MCF 10A (cell line): ENCODE measurements at regions of chr1 and their contacts with region 1.

Region 1: GRCh38 chr1:197868751-197869489 is 33.5 kb upstream of the C1orf53 start:
- DNase-seq: peak; percentile 86
- H3K4me3 Mint-ChIP-seq: no peak overlapping the region
- H3K27ac Mint-ChIP-seq: no peak overlapping the region
- H3K4me1 Mint-ChIP-seq: no peaks in the 10 kb centered on the region
- H3K27me3 Mint-ChIP-seq: no peaks in the 10 kb centered on the region
- CTCF ChIP-seq: peak; percentile 88

Region 2: GRCh38 chr1:197526736-197527371 is 342.1 kb before region 1 on chr1:
- CTCF ChIA-PET with region 1: interaction called, 12 read pairs
- POLR2A ChIA-PET with region 1: no interaction called
- intact Hi-C with region 1: loop called (anchors 1 kb)
- DNase-seq: peak; percentile 50
- H3K4me3 Mint-ChIP-seq: no peak overlapping the region
- H3K27ac Mint-ChIP-seq: no peak overlapping the region
- H3K4me1 Mint-ChIP-seq: no peaks in the 10 kb centered on the region
- H3K27me3 Mint-ChIP-seq: no peaks in the 10 kb centered on the region
- CTCF ChIP-seq: peak; percentile 73

Region 3: GRCh38 chr1:197649188-197649587 is 219.7 kb before region 1 on chr1:
- CTCF ChIA-PET with region 1: interaction called, 13 read pairs
- POLR2A ChIA-PET with region 1: no interaction called
- intact Hi-C with region 1: no loop called
- DNase-seq: no peak
- H3K4me3 Mint-ChIP-seq: no peak overlapping the region
- H3K27ac Mint-ChIP-seq: no peak overlapping the region
- H3K4me1 Mint-ChIP-seq: no peaks in the 10 kb centered on the region
- H3K27me3 Mint-ChIP-seq: no peaks in the 10 kb centered on the region
- CTCF ChIP-seq: no peak

Region 4: GRCh38 chr1:197775282-197776262 is 93.3 kb before region 1 on chr1 and contains the start of gene DENND1B:
- CTCF ChIA-PET with region 1: interaction called, 13 read pairs
- POLR2A ChIA-PET with region 1: interaction called, 7 read pairs
- intact Hi-C with region 1: loop called (anchors 1 kb)
- DNase-seq: peak; percentile 84
- H3K4me3 Mint-ChIP-seq: peak within 1 kb of the TSS; percentile 67
- H3K27ac Mint-ChIP-seq: peak within 1 kb of the TSS; percentile 72
- H3K4me1 Mint-ChIP-seq: peaks cover 45% of the 10 kb centered on the region
- H3K27me3 Mint-ChIP-seq: no peaks in the 10 kb centered on the region
- CTCF ChIP-seq: no peak
- total RNA-seq, gene DENND1B: 19.2 and 20.9 TPM in 2 replicates

Region 5: DNA sequence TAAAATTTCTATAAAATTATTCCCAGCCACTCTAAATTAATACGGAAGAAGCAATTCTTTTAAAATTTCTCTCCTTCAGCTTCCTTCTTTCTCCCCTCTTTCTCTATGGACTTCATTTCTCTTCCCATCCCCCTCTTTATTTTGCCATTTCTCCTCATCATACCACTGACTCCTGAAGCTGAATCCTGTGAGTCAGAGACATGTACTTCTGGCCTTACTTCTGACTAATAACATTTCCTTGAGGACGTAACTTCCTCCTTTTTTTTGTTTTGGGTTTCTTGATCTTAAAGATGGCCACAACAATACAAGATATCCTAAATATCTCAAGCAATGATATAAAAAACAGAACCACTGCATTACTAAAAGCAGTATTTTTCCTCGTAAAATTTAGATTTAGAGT is 30.1 kb before region 1 on chr1:
- CTCF ChIA-PET with region 1: interaction called, 15 read pairs
- POLR2A ChIA-PET with region 1: interaction called, 3 read pairs
- intact Hi-C with region 1: no loop called
- DNase-seq: peak; percentile 85
- H3K4me3 Mint-ChIP-seq: no peak overlapping the region
- H3K27ac Mint-ChIP-seq: peak overlapping the region; percentile 57
- H3K4me1 Mint-ChIP-seq: peaks cover 7% of the 10 kb centered on the region
- H3K27me3 Mint-ChIP-seq: no peaks in the 10 kb centered on the region
- CTCF ChIP-seq: no peak

Region 6: GRCh38 chr1:197902454-197903195 is 33.7 kb after region 1 on chr1 and contains the start of gene C1orf53:
- CTCF ChIA-PET with region 1: interaction called, 22 read pairs
- POLR2A ChIA-PET with region 1: interaction called, 10 read pairs
- intact Hi-C with region 1: no loop called
- DNase-seq: peak; percentile 92
- H3K4me3 Mint-ChIP-seq: peak within 1 kb of the TSS; percentile 86
- H3K27ac Mint-ChIP-seq: peak within 1 kb of the TSS; percentile 93
- H3K4me1 Mint-ChIP-seq: peaks cover 26% of the 10 kb centered on the region
- H3K27me3 Mint-ChIP-seq: no peaks in the 10 kb centered on the region
- CTCF ChIP-seq: no peak
- total RNA-seq, gene C1orf53: 10.7 and 15.1 TPM in 2 replicates

Region 7: GRCh38 chr1:197984289-197984688 is 115.4 kb after region 1 on chr1:
- CTCF ChIA-PET with region 1: no interaction called
- POLR2A ChIA-PET with region 1: no interaction called
- intact Hi-C with region 1: no loop called
- DNase-seq: no peak
- H3K4me3 Mint-ChIP-seq: no peak overlapping the region
- H3K27ac Mint-ChIP-seq: no peak overlapping the region
- H3K4me1 Mint-ChIP-seq: no peaks in the 10 kb centered on the region
- H3K27me3 Mint-ChIP-seq: no peaks in the 10 kb centered on the region
- CTCF ChIP-seq: no peak

Region 8: GRCh38 chr1:198465201-198466144 is 596.6 kb after region 1 on chr1:
- CTCF ChIA-PET with region 1: interaction called, 4 read pairs
- POLR2A ChIA-PET with region 1: no interaction called
- intact Hi-C with region 1: loop called (anchors 5 kb)
- DNase-seq: peak; percentile 79
- H3K4me3 Mint-ChIP-seq: no peak overlapping the region
- H3K27ac Mint-ChIP-seq: peak overlapping the region; percentile 74
- H3K4me1 Mint-ChIP-seq: peaks cover 32% of the 10 kb centered on the region
- H3K27me3 Mint-ChIP-seq: no peaks in the 10 kb centered on the region
- CTCF ChIP-seq: peak; percentile 84